Right cardiac atrium (tissue), 5 donors: ENCODE measurements at regions of chr15 and their contacts with region 1.

Region 1: DNA sequence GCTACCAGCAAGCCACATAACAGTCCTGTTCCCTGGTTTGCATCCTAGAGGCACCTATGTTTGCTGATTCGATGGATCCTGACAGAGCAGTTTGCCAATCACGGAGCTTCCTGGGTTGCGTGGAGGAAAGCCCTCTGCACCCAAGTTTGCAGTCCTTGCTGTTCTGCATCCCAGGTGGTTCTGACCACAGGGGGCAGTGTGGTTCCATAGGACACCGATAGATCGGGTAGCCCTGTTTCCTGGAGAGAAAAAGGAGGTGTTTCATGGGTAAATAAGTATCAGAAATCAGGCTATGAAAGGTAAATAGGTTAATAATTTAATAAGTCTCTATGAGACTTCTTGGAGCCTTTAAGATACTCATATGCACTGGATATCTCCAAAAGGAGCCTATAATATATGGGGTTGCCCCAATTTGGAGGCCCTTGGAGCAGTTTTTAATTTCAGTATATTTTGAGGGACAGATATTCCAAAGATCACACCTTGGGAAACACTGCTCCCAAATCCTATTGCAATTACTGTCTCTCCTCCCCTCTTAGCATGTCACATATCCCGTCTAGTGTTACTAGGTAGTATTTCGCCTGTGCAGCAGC is 194.6 kb upstream of the TPM1 start:
- DNase-seq: peak; percentile 74 to 92 (median 85)
- ATAC-seq: peak; percentile 57 to 60
- H3K4me3 ChIP-seq: no peak overlapping the region
- H3K27ac ChIP-seq: no peak overlapping the region
- H3K4me1 ChIP-seq: peaks cover 6% of the 10 kb centered on the region
- H3K27me3 ChIP-seq: no peaks in the 10 kb centered on the region

Region 2: DNA sequence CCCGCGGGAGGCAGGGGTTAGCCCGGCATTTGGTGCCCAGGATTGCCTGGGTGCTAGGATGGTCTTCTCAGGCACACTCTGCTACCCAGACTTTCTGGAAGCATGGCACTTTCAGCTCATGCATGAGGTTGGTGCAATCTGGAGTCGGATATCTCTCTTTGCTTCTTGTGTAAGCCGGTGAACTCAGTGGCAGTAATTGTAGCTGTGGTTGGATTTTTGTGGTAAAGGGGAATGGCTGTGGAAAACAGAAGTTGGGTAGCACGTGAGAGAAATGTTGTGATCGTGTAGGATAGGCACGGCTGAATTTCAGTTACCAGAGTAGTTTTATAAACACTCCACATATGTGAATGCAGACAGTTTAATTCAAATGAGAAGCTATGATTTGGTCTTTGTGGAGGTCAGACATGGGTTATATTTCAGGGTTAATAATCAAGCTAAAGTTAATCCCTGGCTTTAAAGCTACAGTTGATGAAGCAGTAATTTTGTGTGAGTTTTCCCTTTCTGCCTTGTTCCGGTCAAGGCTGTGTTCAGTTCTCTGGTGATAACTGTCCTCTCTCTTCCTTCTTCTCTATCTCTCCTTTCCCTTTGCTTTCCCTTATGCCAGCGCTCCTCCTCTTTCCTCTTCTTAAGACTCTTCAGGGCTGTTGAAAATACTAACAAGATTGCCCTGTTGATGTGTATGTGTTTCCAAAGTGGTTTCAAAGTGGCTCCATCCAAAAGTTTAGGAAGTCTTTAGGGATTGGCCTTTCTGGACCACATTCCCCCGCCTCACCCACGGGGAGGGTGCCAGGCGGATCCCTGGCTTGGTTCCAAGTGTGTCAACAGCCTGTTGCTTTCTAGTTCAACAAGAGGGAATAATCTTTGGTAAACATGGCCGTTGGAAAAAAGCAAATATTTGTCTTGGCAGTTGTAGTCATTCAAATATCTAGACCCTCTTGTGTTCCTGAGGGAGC is 278.3 kb before region 1 on chr15:
- intact Hi-C with region 1: no loop called
- DNase-seq: peak; percentile 87 to 95 (median 94)
- ATAC-seq: peak; percentile 70 to 76
- H3K4me3 ChIP-seq: no peak overlapping the region
- H3K27ac ChIP-seq: no peak overlapping the region
- H3K4me1 ChIP-seq: peaks cover 11% of the 10 kb centered on the region
- H3K27me3 ChIP-seq: no peaks in the 10 kb centered on the region

Region 3: DNA sequence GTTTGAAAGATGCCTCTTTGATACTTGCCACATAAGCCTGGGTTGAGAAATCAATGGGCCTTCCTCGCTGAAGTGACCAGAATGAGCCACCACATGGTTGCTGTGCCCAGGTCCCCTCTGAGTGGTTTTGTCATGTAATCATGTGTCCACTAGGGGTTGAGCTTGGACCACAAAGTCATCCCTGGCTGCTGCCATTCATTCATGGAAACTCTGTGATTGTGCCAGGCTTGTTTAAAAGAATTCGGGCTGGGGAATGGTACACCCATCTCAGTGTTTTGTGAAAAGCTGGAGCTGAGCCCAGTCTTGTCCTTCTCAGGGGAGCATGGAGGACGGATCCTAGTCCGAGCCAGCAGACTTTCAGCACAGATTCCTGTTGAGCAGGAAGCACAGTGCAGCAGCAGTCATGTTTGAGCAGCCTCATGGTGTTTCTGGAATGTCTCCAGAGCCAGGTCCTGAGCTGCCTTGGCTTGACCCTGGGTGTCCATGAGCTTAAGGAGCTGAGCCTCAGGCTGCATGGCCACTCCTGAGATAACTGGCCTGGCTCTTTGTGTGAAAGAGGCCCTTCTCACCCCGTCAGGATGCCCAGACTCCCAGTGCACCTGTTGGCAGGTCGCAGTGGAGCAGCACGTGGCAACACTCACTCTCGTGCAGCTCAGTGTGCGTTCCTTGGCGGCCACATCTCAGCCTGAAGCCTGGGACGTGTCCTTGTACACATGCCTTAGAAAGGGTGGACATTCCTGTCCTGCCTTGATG is 65.8 kb before region 1 on chr15:
- intact Hi-C with region 1: loop called in 2 of 4 experiments (anchors 5 to 10 kb)
- DNase-seq: peak; percentile 87 to 90 (median 87)
- ATAC-seq: peak; percentile 92
- H3K4me3 ChIP-seq: no peak overlapping the region
- H3K27ac ChIP-seq: peak overlapping the region; percentile 78
- H3K4me1 ChIP-seq: peaks cover 5% of the 10 kb centered on the region
- H3K27me3 ChIP-seq: no peaks in the 10 kb centered on the region

Region 4: GRCh38 chr15:62809112-62809967 is 38.7 kb before region 1 on chr15:
- intact Hi-C with region 1: no loop called
- DNase-seq: no peak
- ATAC-seq: no peak
- H3K4me3 ChIP-seq: no peak overlapping the region
- H3K27ac ChIP-seq: no peak overlapping the region
- H3K4me1 ChIP-seq: no peaks in the 10 kb centered on the region
- H3K27me3 ChIP-seq: no peaks in the 10 kb centered on the region

Region 5: GRCh38 chr15:62896978-62897647 is 49.1 kb after region 1 on chr15:
- intact Hi-C with region 1: loop called in 1 of 4 experiments (anchors 10 kb)
- DNase-seq: peak; percentile 90 to 95 (median 95)
- ATAC-seq: peak; percentile 88 to 94
- H3K4me3 ChIP-seq: peak overlapping the region; percentile 7
- H3K27ac ChIP-seq: peak overlapping the region; percentile 86
- H3K4me1 ChIP-seq: peaks cover 7% of the 10 kb centered on the region
- H3K27me3 ChIP-seq: no peaks in the 10 kb centered on the region

Region 6: DNA sequence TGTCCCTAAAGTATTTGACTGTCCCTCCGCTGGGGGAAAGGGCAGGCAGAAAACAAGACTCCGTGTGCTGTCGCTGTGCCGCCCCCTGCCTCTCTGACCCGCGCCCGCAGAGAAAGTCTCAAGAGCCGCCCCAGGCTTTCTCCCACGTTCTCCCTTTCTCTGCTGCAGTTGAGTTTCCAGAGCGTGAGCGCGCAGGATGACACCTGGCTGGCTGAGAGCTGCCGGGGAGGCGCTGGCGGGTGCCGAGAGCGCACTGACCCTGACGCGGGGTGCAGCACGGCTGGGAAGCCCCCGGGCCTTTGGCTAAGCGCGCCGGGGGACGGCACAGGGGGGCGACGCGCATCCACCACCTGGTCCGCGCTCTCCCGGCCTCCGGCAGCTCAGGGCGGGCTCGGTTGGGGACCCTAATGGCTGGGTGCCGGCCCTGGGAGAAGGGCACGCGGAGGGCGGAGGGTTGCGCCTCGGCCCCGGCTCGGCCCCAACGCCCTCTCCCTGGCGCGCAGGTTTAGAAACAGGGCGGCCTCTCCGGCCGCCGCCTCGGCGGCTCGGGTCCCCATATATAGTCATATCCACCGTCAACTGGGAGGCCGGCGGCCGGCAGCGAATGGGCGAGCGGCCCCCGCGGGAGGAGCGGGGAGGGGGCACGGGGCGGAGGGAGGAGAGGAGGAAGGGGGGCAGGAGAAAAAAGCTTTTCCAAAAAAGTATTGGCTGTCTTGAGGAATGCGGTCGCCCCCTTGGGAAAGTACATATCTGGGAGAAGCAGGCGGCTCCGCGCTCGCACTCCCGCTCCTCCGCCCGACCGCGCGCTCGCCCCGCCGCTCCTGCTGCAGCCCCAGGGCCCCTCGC is 194.2 kb after region 1 on chr15 and contains the start of gene TPM1:
- intact Hi-C with region 1: loop called (anchors 5 to 10 kb)
- DNase-seq: peak; percentile 85 to 96 (median 94)
- ATAC-seq: peak; percentile 88 to 89
- H3K4me3 ChIP-seq: peak within 1 kb of the TSS; percentile 86
- H3K27ac ChIP-seq: peak within 1 kb of the TSS; percentile 91
- H3K4me1 ChIP-seq: peaks cover 2% of the 10 kb centered on the region
- H3K27me3 ChIP-seq: no peaks in the 10 kb centered on the region
- total RNA-seq, gene TPM1: 6,360 to 7,970 (median 7,200) TPM

Region 7: GRCh38 chr15:63048115-63048775 is 200.2 kb after region 1 on chr15:
- intact Hi-C with region 1: loop called (anchors 5 to 10 kb)
- DNase-seq: peak; percentile 90 to 97 (median 96)
- ATAC-seq: peak; percentile 87 to 94
- H3K4me3 ChIP-seq: peak overlapping the region; percentile 86
- H3K27ac ChIP-seq: peak overlapping the region; percentile 74
- H3K4me1 ChIP-seq: peaks cover 10% of the 10 kb centered on the region
- H3K27me3 ChIP-seq: no peaks in the 10 kb centered on the region

Region 8: DNA sequence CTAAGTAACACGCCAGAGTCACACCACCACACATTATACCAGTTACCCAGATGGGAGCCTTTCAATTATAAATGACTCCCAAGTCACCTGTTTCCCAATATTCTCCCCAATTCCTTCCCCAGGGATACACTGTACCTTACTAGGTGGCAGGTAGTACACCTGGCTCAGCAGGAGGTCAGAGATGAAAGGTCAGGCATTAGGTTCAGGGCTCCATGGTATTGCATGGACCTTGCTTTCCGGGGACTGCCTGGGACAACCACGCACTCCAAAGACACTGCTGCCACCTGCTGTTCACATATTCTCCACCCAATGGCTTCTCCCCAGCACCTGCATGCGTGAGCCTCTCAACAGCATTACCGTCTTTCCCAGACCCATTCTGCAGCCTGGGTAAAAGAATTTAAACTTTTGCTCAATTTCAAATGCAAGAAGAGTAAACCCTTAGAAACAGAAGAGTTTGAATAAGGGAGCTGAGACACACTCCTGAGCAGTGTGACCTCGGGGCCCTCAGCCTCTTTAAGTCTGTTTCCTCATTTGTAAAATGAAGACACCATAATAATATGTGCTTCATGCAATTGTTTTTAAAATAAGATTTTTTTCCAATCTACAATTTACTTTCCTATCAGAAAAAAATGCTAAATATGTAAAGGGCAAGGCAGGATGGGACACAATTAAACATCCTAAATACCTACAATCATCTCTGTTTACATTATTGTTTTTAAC is 245.7 kb after region 1 on chr15:
- intact Hi-C with region 1: loop called in 3 of 4 experiments (anchors 2 to 10 kb)
- DNase-seq: peak; percentile 79 to 89 (median 86)
- ATAC-seq: peak; percentile 91 to 92
- H3K4me3 ChIP-seq: no peak overlapping the region
- H3K27ac ChIP-seq: no peak overlapping the region
- H3K4me1 ChIP-seq: peaks cover 7% of the 10 kb centered on the region
- H3K27me3 ChIP-seq: no peaks in the 10 kb centered on the region